OCI-LY7 (cell line): ENCODE measurements at regions of chr13 and their contacts with region 1.

Region 1: GRCh38 chr13:21670883-21671619 is at the start of gene FGF9:
- DNase-seq: peak; percentile 92
- H3K4me3 ChIP-seq: peak within 1 kb of the TSS; percentile 90
- H3K27ac ChIP-seq: peak within 1 kb of the TSS; percentile 72
- H3K4me1 ChIP-seq: peaks cover 41% of the 10 kb centered on the region
- CTCF ChIP-seq: no peak
- total RNA-seq, gene FGF9: 2.2 and 4.7 TPM in 2 replicates

Region 2: DNA sequence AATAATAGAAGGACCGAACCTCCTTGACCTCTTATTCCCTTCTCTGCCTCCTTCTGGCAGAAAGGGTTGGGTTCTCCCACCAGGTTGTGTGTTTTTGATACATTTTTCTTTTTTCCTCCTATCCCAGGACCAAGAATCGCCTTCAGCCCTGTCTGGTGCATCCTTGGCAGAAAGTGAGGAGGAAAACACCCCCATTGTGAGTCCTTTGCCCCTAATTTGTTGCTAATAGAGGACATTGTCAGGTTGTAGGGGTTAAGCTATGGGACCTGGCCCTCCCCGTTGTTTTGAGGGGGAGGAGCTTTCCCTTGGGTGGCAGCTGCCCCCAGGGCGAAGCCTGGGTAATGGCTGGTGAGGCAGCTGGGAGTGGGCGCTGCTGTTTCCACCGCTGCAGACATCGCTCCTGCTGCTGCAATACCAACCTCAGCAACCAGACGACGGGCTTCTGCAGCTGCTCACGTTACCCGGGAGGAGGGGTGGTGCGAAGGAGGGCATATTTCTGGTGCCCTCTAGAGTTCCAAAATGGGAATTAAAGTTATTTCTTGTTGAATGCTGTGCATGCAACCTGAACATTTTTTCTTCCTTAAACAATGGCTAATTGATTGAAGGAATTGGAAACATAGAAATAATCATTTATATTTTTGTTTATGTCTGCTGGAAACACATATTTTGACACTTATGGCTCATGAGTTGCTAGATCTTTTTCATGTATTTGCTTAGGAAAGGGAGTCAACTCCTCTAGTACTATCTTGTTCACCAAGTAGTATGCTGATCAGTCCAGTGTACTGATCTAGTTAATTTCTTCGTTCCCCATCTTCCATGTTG is 1711.0 kb before region 1 on chr13:
- CTCF ChIA-PET with region 1: no interaction called
- POLR2A ChIA-PET with region 1: no interaction called
- intact Hi-C with region 1: loop called (anchors 5 kb)
- DNase-seq: peak; percentile 94
- H3K4me3 ChIP-seq: peak overlapping the region; percentile 96
- H3K27ac ChIP-seq: peak overlapping the region; percentile 83
- H3K4me1 ChIP-seq: peaks cover 28% of the 10 kb centered on the region
- CTCF ChIP-seq: peak; percentile 86

Region 3: DNA sequence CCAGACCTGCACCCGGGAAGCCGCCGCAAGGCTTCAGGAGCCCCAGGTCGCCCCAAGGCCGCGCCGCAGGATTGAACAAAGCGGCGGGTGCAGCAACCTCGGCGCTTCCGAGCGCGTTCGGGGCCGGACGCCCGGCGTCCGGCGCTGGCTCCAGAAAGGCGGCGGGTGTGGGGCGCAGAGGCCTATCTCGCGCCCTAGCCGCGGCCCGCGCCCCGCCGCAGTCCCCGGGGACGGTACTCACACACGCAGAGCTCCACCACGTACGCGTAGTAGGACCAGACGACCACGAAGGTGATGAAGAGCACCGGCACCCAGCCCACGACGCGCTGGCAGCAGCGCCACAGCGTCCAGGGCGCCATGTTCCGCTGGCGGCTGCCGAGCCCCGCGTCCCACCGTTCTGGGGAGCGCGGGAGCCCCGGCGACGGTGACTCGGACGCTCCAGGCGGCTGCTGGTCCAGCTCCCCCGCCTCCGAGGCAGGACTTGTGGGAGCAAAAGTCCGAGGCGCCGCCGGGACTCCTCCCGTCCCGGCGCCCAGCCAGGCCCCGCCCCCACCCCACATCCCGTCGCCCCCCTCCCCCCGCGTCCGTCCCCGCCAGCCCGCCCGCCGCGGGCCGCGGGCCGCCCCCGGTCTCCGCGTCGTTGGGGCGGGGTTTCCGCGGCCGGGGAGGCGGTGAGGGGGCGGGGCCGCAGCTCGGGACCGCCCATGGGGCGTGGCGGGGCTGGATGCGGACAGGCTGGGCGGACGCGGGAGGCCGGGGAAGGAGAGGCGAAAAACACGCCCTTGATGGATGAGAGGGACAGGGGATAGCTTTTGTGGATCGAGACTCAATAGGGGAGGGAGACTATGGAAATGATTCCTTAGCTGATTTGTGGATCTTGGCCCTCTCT is 212.0 kb before region 1 on chr13 and contains the start of gene ZDHHC20:
- CTCF ChIA-PET with region 1: no interaction called
- POLR2A ChIA-PET with region 1: no interaction called
- intact Hi-C with region 1: loop called (anchors 5 kb)
- DNase-seq: peak; percentile 86
- H3K4me3 ChIP-seq: peak within 1 kb of the TSS; percentile 81
- H3K27ac ChIP-seq: peak within 1 kb of the TSS; percentile 77
- H3K4me1 ChIP-seq: peaks cover 20% of the 10 kb centered on the region
- CTCF ChIP-seq: no peak
- total RNA-seq, gene ZDHHC20: 37.1 and 39.6 TPM in 2 replicates

Region 4: GRCh38 chr13:21603531-21604448 is 67.3 kb before region 1 on chr13 and contains the start of gene MICU2:
- CTCF ChIA-PET with region 1: no interaction called
- POLR2A ChIA-PET with region 1: interaction called, 10 read pairs
- intact Hi-C with region 1: loop called (anchors 1 kb)
- DNase-seq: peak; percentile 97
- H3K4me3 ChIP-seq: peak within 1 kb of the TSS; percentile 72
- H3K27ac ChIP-seq: peak within 1 kb of the TSS; percentile 73
- H3K4me1 ChIP-seq: peaks cover 13% of the 10 kb centered on the region
- CTCF ChIP-seq: no peak
- total RNA-seq, gene MICU2: 41.6 and 51.3 TPM in 2 replicates

Region 5: DNA sequence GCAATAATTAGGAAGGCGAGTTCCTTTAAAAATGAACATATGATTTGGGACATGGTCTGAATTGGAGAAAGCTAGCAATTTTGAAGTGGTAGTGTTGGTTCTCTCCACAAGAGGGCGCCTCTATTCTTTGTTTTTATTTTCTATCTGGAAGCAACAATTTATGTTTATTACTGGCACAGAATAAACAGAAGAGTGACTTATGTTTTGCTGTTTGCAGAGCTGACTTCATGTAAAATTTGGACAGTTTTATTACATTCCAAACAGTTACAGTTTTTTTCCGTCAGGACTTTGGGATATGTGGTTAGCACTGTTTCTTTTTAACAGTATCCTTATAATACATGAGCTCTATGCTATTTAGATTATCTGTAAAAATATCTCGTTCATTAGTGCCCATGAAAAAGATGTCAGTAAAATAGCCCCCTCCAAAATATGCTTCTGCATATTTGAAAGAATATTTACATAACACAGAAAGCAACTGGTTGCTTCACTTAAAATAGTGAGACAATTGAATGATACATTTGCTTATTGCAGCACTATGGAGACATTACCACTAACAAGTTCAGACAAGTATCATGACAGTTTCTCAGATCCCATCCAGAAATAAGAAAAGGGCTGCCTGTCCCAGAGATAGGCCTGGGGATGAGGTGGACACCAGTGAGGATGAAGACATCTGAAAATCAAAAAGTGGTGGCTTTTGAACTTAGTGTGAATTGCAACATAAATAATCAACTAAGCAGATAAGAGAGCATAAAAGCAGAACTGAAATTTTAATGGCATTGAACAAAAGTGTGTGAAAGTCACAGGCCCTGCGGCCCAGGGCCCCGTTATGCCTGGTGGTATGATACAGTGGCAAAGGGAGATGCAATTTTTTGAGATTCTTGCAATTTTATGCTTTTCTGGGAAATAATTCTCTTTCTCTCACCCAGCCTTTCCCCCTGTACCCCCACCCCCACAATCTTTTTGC is 32.5 kb before region 1 on chr13:
- CTCF ChIA-PET with region 1: no interaction called
- POLR2A ChIA-PET with region 1: interaction called, 3 read pairs
- intact Hi-C with region 1: loop called (anchors 2 kb)
- DNase-seq: peak; percentile 40
- H3K4me3 ChIP-seq: no peak overlapping the region
- H3K27ac ChIP-seq: no peak overlapping the region
- H3K4me1 ChIP-seq: no peaks in the 10 kb centered on the region
- CTCF ChIP-seq: peak; percentile 95

Region 6: DNA sequence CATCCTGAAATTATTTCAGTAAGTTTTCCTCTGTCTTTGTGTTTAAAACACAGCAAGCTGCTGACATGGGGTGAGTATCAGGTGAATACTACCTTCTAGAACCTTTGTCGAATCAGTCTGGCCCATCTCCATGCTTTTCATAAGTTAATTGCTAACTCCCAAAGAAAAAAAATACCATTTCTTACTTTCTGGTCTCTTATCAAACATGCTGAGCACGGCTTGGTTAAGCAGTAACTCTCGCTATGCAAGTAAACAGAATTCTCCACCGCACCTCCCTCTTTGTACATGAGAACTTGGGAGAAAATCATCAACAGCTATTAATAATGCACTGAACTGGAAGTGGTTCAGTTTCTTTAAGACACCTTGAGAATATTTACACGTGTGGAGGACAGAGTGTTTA is 88.4 kb after region 1 on chr13:
- CTCF ChIA-PET with region 1: no interaction called
- POLR2A ChIA-PET with region 1: no interaction called
- intact Hi-C with region 1: no loop called
- DNase-seq: no peak
- H3K4me3 ChIP-seq: no peak overlapping the region
- H3K27ac ChIP-seq: no peak overlapping the region
- H3K4me1 ChIP-seq: no peaks in the 10 kb centered on the region
- CTCF ChIP-seq: no peak

Region 7: DNA sequence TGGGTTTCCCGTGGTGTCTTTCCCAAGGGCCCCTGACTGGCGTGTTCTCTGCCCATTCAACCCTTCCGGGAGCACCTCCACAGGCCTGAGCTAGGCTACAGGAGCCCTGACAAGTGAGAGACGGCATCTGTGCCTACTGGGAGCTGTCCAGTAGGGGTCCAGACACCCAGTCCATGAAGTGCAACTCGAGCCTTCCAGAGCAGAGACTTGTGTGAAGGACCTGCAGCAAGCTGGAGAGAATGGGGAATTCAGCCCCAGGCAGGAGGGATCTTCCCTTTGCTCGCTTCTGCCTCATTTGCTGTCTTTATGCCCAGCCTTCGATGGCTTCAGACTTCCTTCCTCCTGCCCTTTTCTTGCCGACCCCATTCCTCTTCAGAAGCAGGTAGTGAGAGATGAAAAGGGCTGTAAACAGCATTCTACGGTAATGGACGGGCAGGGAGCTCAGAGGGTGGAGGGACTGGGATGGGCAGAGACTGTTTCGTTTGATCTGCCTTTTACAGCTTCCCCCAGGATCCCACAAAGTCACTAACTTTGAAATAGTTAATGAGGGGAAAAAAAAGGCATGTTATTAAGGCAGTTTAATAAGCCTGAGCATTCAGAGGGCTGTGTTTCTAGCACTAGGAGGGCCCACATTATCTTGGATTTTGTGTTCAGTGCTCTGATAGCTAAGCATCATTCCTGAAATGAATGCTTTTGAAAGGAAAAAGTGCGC is 327.4 kb after region 1 on chr13:
- CTCF ChIA-PET with region 1: no interaction called
- POLR2A ChIA-PET with region 1: no interaction called
- intact Hi-C with region 1: no loop called
- DNase-seq: no peak
- H3K4me3 ChIP-seq: no peak overlapping the region
- H3K27ac ChIP-seq: no peak overlapping the region
- H3K4me1 ChIP-seq: no peaks in the 10 kb centered on the region
- CTCF ChIP-seq: no peak

Region 8: GRCh38 chr13:22399801-22400420 is 728.9 kb after region 1 on chr13:
- CTCF ChIA-PET with region 1: no interaction called
- POLR2A ChIA-PET with region 1: no interaction called
- intact Hi-C with region 1: no loop called
- DNase-seq: no peak
- H3K4me3 ChIP-seq: no peak overlapping the region
- H3K27ac ChIP-seq: no peak overlapping the region
- H3K4me1 ChIP-seq: no peaks in the 10 kb centered on the region
- CTCF ChIP-seq: no peak